ENCODE measurements at regions of chr1 and their contacts with region 1.

Region 1: DNA sequence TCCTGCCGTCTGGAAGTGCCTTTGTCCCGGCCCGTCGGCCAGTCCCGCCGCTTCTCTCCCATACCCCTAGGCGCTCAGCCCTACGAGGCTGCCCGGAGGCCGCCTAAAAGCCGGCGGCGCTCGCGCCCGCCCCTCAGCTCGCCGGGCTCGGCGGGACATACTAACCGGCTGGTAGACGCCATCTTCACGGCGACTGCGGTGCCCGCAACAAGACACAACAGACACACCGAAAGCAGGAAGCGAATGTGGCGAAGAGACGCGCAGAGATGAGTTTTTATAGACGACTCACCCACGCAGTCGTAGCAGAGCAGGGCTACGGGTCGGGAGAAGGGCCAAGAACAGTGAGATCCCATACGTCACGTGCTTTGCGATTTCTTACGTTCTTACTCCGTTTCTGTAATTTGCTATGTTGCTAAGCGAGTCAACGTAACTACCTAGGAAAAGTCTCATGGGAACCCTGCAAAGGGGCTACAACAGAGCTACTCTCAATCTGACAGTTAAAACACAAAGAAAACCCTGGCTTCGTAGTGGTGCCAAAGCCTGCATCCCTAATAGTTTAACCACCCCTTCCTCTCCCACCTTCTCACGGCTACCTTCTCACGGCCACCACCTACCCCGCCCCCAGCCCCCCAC is at the start of gene GTF2B:
- DNase-seq: peak; percentile 91 to 92
- ATAC-seq: peak; percentile 91 to 94
- H3K4me3 ChIP-seq: peak within 1 kb of the TSS; percentile 95 to 100 (median 98)
- H3K27ac ChIP-seq: peak within 1 kb of the TSS; percentile 92 to 99 (median 97)
- H3K4me1 ChIP-seq: peaks cover 23 to 28% of the 10 kb centered on the region in 2 donors
- H3K27me3 ChIP-seq: no peaks in the 10 kb centered on the region
- CTCF ChIP-seq: no peak
- POLR2A ChIP-seq: peak; percentile 86 to 87
- total RNA-seq, gene GTF2B: 20.2 to 30.3 (median 24.7) TPM

Region 2: GRCh38 chr1:88678405-88678804 is 213.0 kb before region 1 on chr1:
- in situ Hi-C with region 1: loop called in 2 of 4 experiments (anchors 10 kb)
- intact Hi-C with region 1: no loop called
- DNase-seq: no peak
- ATAC-seq: no peak
- H3K4me3 ChIP-seq: no peak overlapping the region
- H3K27ac ChIP-seq: no peak overlapping the region
- H3K4me1 ChIP-seq: peaks cover 4 to 6% of the 10 kb centered on the region in 2 donors
- H3K27me3 ChIP-seq: no peaks in the 10 kb centered on the region
- CTCF ChIP-seq: no peak
- POLR2A ChIP-seq: no peak

Region 3: GRCh38 chr1:88917321-88918025 is 26.0 kb after region 1 on chr1:
- in situ Hi-C with region 1: no loop called
- intact Hi-C with region 1: no loop called
- DNase-seq: no peak
- ATAC-seq: no peak
- H3K4me3 ChIP-seq: no peak overlapping the region
- H3K27ac ChIP-seq: no peak overlapping the region
- H3K4me1 ChIP-seq: no peaks in the 10 kb centered on the region
- H3K27me3 ChIP-seq: no peaks in the 10 kb centered on the region
- CTCF ChIP-seq: no peak
- POLR2A ChIP-seq: no peak

Region 4: GRCh38 chr1:88946861-88947260 is 55.4 kb after region 1 on chr1:
- in situ Hi-C with region 1: no loop called
- intact Hi-C with region 1: no loop called
- DNase-seq: no peak
- ATAC-seq: no peak
- H3K4me3 ChIP-seq: no peak overlapping the region
- H3K27ac ChIP-seq: no peak overlapping the region
- H3K4me1 ChIP-seq: no peaks in the 10 kb centered on the region
- H3K27me3 ChIP-seq: no peaks in the 10 kb centered on the region
- CTCF ChIP-seq: no peak
- POLR2A ChIP-seq: no peak

Region 5: GRCh38 chr1:88990426-88990825 is 99.0 kb after region 1 on chr1:
- in situ Hi-C with region 1: no loop called
- intact Hi-C with region 1: loop called (anchors 1 kb)
- DNase-seq: no peak
- ATAC-seq: no peak
- H3K4me3 ChIP-seq: no peak overlapping the region
- H3K27ac ChIP-seq: peak overlapping the region in 1 of 4 donors; percentile 19
- H3K4me1 ChIP-seq: peaks cover 10 to 19% of the 10 kb centered on the region in 2 donors
- H3K27me3 ChIP-seq: no peaks in the 10 kb centered on the region
- CTCF ChIP-seq: no peak
- POLR2A ChIP-seq: no peak

Measured in gastrocnemius medialis (tissue), 4 donors.